H1 (cell line): ENCODE measurements at regions of chr2 and their contacts with region 1.

Region 1: DNA sequence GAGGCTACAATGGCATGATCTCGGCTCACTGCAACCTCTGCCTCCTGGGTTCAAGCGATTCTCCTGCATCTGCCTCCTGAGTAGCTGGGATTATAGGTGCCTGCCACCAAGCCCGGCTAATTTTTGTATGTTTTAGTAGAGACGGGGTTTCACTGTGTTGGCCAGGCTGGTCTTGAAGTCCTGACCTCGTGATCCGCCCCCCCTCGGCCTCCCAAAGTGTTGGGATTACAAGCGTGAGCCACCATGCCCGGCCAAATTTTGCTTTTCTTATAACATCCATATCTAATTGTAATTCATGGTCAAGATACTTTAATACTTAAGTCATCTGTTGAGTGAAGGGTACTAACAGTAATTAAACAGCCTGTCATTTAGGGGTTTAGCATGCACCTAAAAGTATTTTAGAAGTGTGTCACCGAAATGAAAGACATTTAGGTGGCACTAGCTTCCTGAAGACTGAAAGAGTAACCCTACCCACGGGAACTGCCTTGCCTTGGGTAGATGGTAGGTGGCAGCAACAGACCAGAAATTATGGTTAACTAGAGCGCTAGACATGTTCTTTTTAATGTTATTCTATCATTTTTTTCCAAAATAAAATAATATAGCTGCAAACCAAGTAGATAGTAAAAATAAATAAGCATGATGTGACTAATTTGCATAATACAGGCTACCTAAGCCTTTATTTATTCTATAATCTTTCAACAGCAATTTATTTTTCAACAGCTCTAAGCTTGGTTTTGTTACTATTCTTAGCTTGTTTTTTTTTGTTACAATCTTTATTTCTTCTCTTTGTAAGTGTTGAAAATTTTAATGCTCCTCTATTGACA is 8.6 kb upstream of the ACYP2 start:
- DNase-seq: no peak
- H3K4me3 ChIP-seq: no peak overlapping the region
- H3K27ac ChIP-seq: no peak overlapping the region
- H3K4me1 ChIP-seq: peaks cover 0 to 4% (median 1%) of the 10 kb centered on the region in 4 experiments; a peak in 1 of 7 replicates
- H3K27me3 ChIP-seq: no peaks in the 10 kb centered on the region
- CTCF ChIP-seq: peak; percentile 43 to 79 (median 60)
- EP300 ChIP-seq: no peak
- POLR2A ChIP-seq: no peak
- RAD21 ChIP-seq: peak; percentile 78 to 82

Region 2: GRCh38 chr2:53987336-53987921 is 119.4 kb before region 1 on chr2:
- CTCF ChIA-PET with region 1: no interaction called
- POLR2A ChIA-PET with region 1: no interaction called
- DNase-seq: no peak
- H3K4me3 ChIP-seq: no peak overlapping the region
- H3K27ac ChIP-seq: no peak overlapping the region
- H3K4me1 ChIP-seq: no peaks in the 10 kb centered on the region
- H3K27me3 ChIP-seq: no peaks in the 10 kb centered on the region
- CTCF ChIP-seq: no peak
- EP300 ChIP-seq: no peak
- POLR2A ChIP-seq: no peak
- RAD21 ChIP-seq: no peak

Region 3: GRCh38 chr2:54092940-54093339 is 13.9 kb before region 1 on chr2:
- CTCF ChIA-PET with region 1: interaction called, 17 read pairs
- POLR2A ChIA-PET with region 1: no interaction called
- DNase-seq: no peak
- H3K4me3 ChIP-seq: no peak overlapping the region
- H3K27ac ChIP-seq: no peak overlapping the region
- H3K4me1 ChIP-seq: peaks cover 0 to 9% (median 3%) of the 10 kb centered on the region in 4 experiments; a peak in 4 of 7 replicates
- H3K27me3 ChIP-seq: no peaks in the 10 kb centered on the region
- CTCF ChIP-seq: no peak
- EP300 ChIP-seq: no peak
- POLR2A ChIP-seq: no peak
- RAD21 ChIP-seq: no peak

Region 4: GRCh38 chr2:54176577-54176976 is 69.7 kb after region 1 on chr2:
- CTCF ChIA-PET with region 1: interaction called, 11 read pairs
- POLR2A ChIA-PET with region 1: no interaction called
- DNase-seq: peak; percentile 10 to 63
- H3K4me3 ChIP-seq: no peak overlapping the region
- H3K27ac ChIP-seq: no peak overlapping the region
- H3K4me1 ChIP-seq: no peaks in the 10 kb centered on the region
- H3K27me3 ChIP-seq: no peaks in the 10 kb centered on the region
- CTCF ChIP-seq: peak; percentile 46 to 79 (median 70)
- EP300 ChIP-seq: no peak
- POLR2A ChIP-seq: no peak
- RAD21 ChIP-seq: peak; percentile 87 to 94

Region 5: GRCh38 chr2:54295911-54296310 is 189.1 kb after region 1 on chr2:
- CTCF ChIA-PET with region 1: no interaction called
- POLR2A ChIA-PET with region 1: no interaction called
- DNase-seq: no peak
- H3K4me3 ChIP-seq: no peak overlapping the region
- H3K27ac ChIP-seq: no peak overlapping the region
- H3K4me1 ChIP-seq: peaks cover 0 to 5% (median 1%) of the 10 kb centered on the region in 4 experiments; a peak in 2 of 7 replicates
- H3K27me3 ChIP-seq: peaks cover 6 to 9% (median 7%) of the 10 kb centered on the region in 4 experiments
- CTCF ChIP-seq: no peak
- EP300 ChIP-seq: no peak
- POLR2A ChIP-seq: no peak
- RAD21 ChIP-seq: no peak

Region 6: GRCh38 chr2:54503192-54503591 is 396.3 kb after region 1 on chr2:
- CTCF ChIA-PET with region 1: interaction called, 62 read pairs
- POLR2A ChIA-PET with region 1: no interaction called
- DNase-seq: peak in 1 of 2 experiments; percentile 82
- H3K4me3 ChIP-seq: no peak overlapping the region
- H3K27ac ChIP-seq: no peak overlapping the region
- H3K4me1 ChIP-seq: peaks cover 0 to 3% (median 1%) of the 10 kb centered on the region in 4 experiments; a peak in 3 of 7 replicates
- H3K27me3 ChIP-seq: no peaks in the 10 kb centered on the region
- CTCF ChIP-seq: peak; percentile 81 to 93 (median 84)
- EP300 ChIP-seq: no peak
- POLR2A ChIP-seq: no peak
- RAD21 ChIP-seq: peak; percentile 92 to 95

Region 7: DNA sequence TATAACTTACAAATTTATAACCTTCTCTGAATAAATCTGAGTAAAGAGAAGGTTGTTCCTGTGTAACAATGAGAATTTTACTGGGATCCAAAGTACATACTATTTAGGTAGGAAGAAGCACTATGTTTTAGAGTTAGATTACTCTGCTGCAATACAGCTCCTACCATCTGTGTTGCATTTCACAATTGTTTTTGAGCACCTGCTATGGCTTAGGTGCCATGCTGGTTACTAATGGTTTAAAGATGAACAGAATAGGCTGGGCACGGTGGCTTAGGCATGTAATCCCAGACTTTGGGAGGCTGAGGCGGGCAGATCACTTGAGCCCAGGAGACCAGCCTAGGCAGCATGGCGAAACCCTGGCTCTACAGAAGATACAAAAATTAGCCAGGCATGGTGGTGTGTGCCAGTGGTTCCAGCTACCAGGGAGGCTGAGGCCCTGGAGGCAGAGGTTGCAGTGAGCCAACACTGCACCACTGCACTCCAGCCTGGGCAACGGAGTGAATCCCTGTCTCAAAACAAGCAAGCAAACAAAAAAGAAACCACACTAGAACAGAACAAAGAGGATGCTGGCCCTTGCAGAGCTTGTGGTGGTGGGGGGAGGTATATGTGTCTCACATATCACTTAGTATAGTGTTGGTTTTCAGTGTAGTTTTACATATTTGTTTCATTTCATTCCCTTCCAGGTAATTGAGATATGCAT is 406.0 kb after region 1 on chr2:
- CTCF ChIA-PET with region 1: interaction called, 10 read pairs
- POLR2A ChIA-PET with region 1: no interaction called
- DNase-seq: no peak
- H3K4me3 ChIP-seq: no peak overlapping the region
- H3K27ac ChIP-seq: no peak overlapping the region
- H3K4me1 ChIP-seq: peaks cover 0 to 9% (median 2%) of the 10 kb centered on the region in 4 experiments; a peak in 4 of 7 replicates
- H3K27me3 ChIP-seq: no peaks in the 10 kb centered on the region
- CTCF ChIP-seq: no peak
- EP300 ChIP-seq: no peak
- POLR2A ChIP-seq: no peak
- RAD21 ChIP-seq: no peak

Region 8: DNA sequence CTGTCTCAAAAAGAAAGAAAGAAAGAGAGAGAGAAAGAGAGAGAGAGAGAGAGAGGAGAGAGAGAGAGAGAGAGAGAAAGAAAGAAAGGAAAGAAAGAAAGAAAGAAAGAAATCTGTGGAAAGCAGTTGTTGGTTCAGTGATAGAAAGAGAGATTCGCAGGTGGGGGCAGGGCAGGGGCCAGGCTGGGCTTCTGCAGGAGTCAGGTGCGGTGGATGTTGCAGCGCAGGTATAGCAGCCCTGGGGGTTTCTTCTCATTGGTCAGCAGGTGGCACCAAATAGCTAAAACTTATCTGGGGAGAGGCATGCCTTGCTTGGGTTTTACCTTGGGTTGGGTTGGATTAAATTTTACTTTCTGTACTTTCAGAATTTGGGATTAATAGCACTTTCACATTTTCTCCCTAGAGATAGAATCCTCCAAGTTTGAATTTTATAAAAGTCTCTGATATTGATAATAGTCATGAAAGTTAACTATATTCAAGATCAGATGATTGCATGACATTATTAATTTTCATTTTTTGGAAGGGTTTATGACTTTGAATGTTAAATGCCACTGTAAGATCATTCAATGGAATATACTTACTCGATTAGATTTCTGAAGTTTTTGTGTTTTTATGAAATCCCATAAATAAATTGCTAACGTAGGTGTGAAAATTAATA is 415.9 kb after region 1 on chr2:
- CTCF ChIA-PET with region 1: interaction called, 11 read pairs
- POLR2A ChIA-PET with region 1: no interaction called
- DNase-seq: peak; percentile 50 to 68
- H3K4me3 ChIP-seq: no peak overlapping the region
- H3K27ac ChIP-seq: no peak overlapping the region
- H3K4me1 ChIP-seq: peaks cover 0 to 3% (median under 1%) of the 10 kb centered on the region in 4 experiments; a peak in 3 of 7 replicates
- H3K27me3 ChIP-seq: no peaks in the 10 kb centered on the region
- CTCF ChIP-seq: peak; percentile 62 to 77 (median 76)
- EP300 ChIP-seq: no peak
- POLR2A ChIP-seq: no peak
- RAD21 ChIP-seq: peak; percentile 87 to 90

Region 9: GRCh38 chr2:54665436-54665856 is 558.6 kb after region 1 on chr2:
- CTCF ChIA-PET with region 1: interaction called, 13 read pairs
- POLR2A ChIA-PET with region 1: no interaction called
- DNase-seq: peak in 1 of 2 experiments; percentile 61
- H3K4me3 ChIP-seq: no peak overlapping the region
- H3K27ac ChIP-seq: no peak overlapping the region
- H3K4me1 ChIP-seq: peaks cover 0 to 3% (median 0%) of the 10 kb centered on the region in 4 experiments; a peak in 3 of 7 replicates
- H3K27me3 ChIP-seq: no peaks in the 10 kb centered on the region
- CTCF ChIP-seq: peak; percentile 46 to 81 (median 64)
- EP300 ChIP-seq: no peak
- POLR2A ChIP-seq: no peak
- RAD21 ChIP-seq: peak; percentile 60 to 72